ENCODE measurements at regions of chr3 and their contacts with region 1.

Region 1: GRCh38 chr3:107522510-107523288 is at the start of gene BBX:
- DNase-seq: peak; percentile 93
- H3K4me3 Mint-ChIP-seq: peak within 1 kb of the TSS; percentile 96
- H3K27ac Mint-ChIP-seq: peak within 1 kb of the TSS; percentile 95
- H3K4me1 Mint-ChIP-seq: peaks cover 19% of the 10 kb centered on the region
- H3K27me3 Mint-ChIP-seq: peaks cover 2% of the 10 kb centered on the region
- total RNA-seq, gene BBX: 35.8 and 39.8 TPM in 2 replicates

Region 2: GRCh38 chr3:107271787-107272387 is 250.8 kb before region 1 on chr3:
- intact Hi-C with region 1: loop called (anchors 10 kb)
- DNase-seq: no peak
- H3K4me3 Mint-ChIP-seq: no peak overlapping the region
- H3K27ac Mint-ChIP-seq: no peak overlapping the region
- H3K4me1 Mint-ChIP-seq: peaks cover 3% of the 10 kb centered on the region
- H3K27me3 Mint-ChIP-seq: peaks cover 17% of the 10 kb centered on the region

Region 3: DNA sequence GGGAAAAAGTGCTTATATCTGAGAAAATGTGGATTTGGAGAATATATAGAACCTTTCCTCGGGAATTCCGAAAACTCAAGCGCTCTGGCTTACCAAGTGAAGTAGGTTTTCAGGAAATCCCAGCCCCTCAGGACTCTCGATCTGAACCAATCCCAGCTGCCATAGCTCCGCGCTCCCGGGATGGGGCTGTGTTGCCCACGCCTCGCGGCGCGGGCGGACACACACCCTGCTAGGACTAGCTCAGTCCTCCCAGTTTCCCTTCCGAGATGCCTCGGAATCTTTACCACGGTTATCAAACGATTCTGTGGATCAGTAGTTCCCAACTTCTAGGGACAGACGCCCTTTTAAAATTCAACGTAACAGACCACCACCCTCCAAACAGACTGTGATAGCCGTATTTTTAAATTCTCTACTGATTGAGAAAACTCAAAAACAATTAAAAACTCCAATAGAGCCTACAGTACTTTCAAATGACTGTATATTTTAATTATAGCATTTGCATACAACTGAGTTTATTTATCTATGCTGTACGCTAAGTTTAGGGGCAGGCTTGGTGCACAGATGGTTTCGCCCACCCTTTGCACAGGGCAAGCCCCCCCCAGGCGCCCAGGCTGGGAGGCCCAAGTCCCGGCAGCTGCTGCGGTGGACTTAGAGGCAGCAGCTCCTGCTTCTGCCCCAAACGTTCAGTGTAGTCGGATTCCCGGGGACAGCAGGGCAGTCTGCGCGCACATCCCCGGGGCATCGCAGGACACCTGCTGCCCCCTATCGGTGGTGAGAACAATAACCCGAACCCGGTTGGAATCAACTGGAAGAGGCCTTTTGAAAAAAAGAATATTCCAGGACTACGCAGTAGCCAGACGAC is 93.1 kb before region 1 on chr3:
- intact Hi-C with region 1: loop called (anchors 1 kb)
- DNase-seq: peak; percentile 43
- H3K4me3 Mint-ChIP-seq: peak overlapping the region; percentile 53
- H3K27ac Mint-ChIP-seq: no peak overlapping the region
- H3K4me1 Mint-ChIP-seq: peaks cover 17% of the 10 kb centered on the region
- H3K27me3 Mint-ChIP-seq: peaks cover 49% of the 10 kb centered on the region

Region 4: DNA sequence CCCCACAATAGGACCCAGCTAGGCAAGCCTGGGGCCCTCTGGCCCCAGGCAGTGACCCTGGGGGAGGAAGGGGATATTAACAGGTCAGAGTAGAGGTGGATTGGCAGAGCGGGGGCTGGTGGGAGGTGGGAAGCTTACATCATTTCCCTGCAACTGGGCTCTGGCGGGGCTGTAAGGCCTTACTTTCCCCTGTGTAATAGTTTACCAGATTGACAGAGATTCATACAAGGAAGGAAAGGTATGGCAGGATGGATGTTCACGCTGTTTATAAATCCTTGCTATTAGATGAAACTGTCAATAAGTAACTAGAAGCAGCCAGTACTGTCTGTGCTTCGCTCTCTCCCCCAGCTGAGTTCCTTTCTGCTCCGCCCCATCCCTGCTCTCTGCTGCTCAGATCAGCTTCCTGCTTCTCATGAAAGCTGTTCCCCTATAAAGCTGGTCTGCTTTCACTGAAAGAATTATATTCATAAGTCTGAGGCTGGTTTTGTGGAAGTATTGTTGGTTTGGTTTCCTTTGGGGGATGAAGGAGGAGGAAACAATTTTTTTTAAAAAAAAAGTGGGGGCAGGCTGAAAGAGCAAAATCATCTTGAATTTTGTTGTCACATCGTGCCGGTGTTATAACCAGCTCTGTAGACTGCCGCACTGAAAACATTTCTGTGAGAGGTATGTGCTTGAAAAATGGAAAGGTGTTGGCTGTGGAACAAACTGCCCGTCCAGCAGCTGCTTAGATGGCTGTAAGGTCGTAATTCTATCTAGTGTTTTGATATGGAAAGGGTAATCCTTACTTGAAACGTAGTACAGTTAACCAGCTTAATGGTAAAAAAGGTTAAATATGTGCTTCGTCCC is 76.5 kb after region 1 on chr3:
- intact Hi-C with region 1: loop called (anchors 2 kb)
- DNase-seq: peak; percentile 23
- H3K4me3 Mint-ChIP-seq: peak overlapping the region; percentile 84
- H3K27ac Mint-ChIP-seq: peak overlapping the region; percentile 90
- H3K4me1 Mint-ChIP-seq: peaks cover 38% of the 10 kb centered on the region
- H3K27me3 Mint-ChIP-seq: no peaks in the 10 kb centered on the region

Region 5: DNA sequence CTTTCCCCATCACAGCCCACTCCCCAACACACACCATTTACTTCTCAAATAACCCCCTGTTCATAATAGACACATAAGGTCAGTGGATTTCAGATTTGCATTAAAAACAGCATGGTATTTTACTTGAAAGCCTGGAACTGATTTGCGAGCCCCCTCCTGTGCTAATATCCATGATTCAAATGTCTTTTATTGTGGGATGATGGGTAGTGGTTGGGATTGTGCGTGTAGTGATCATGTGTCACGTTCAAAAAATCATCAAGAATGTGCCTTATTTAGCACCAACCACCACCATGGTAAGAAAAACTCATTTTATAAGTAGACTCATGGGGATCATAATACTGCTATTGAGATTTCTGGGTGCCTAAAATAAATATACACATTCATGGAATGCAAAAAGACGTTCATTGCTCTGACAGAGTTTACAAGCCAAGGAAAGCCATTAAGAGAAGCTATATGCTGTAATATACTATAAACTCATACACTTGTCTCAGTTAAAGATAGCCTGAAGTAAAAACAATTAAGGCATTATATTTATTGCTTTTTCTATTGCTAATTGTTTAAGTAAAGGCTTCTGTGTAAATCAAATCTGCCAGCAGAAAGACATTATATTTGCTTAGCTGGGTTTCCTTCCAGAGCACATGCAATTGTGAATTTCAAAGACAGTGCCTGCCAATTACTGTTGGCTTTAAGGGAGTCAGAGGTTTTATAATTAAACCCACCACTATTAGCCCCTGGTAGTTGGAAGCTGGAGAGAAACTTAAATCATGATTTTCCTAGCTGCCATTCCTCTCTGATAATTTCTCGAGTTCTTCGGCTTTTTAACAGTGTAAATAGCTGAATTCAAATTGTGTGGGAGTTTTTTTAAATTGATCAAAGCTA is 1303.8 kb after region 1 on chr3:
- intact Hi-C with region 1: loop called (anchors 5 kb)
- DNase-seq: no peak
- H3K4me3 Mint-ChIP-seq: peak overlapping the region; percentile 79
- H3K27ac Mint-ChIP-seq: peak overlapping the region; percentile 88
- H3K4me1 Mint-ChIP-seq: peaks cover 60% of the 10 kb centered on the region
- H3K27me3 Mint-ChIP-seq: no peaks in the 10 kb centered on the region

Measured in activated T-helper 2 cell treated with anti-CD3 and anti-CD28 coated beads, Interferon-gamma antibody, Interleukin-2, Interleukin-4, amounts not matched to agents 10 μg/mL and 5 μg/mL and 100 μg/mL, durations not matched to agents 14 hours and 24 hours and 36 hours (primary cell).